Activated CD4-positive, alpha-beta memory T cell treated with anti-CD3 and anti-CD28 coated beads, Interleukin-2, amount 10 ng/mL, durations not matched to agents 7 days and 5 days (primary cell): ENCODE measurements at regions of chr2 and their contacts with region 1.

Region 1: GRCh38 chr2:3379647-3380534 is at the start of gene TRAPPC12:
- DNase-seq: peak; percentile 95
- H3K4me3 Mint-ChIP-seq: peak within 1 kb of the TSS; percentile 99
- H3K27ac Mint-ChIP-seq: peak within 1 kb of the TSS; percentile 96
- H3K4me1 Mint-ChIP-seq: peaks cover 57% of the 10 kb centered on the region
- H3K27me3 Mint-ChIP-seq: no peaks in the 10 kb centered on the region
- total RNA-seq, gene TRAPPC12: 74.5 to 75.6 TPM

Region 2: DNA sequence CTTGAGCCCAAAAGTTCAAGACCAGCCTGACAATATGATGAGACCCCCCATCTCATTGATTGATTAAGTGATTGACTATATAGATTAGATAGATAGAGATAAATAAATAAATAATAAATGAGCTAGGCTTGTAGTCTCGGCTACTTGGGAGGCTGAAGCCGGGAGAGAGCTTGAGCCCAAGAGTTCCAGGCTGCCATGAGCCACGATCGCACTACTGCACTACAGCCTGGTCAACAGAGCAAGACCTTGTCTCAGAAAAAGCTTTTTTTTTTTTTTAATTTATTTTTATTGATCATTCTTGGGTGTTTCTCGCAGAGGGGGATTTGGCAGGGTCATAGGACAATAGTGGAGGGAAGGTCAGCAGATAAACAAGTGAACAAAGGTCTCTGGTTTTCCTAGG is 14.7 kb before region 1 on chr2:
- CTCF ChIA-PET with region 1: no interaction called
- POLR2A ChIA-PET with region 1: no interaction called
- DNase-seq: no peak
- H3K4me3 Mint-ChIP-seq: no peak overlapping the region
- H3K27ac Mint-ChIP-seq: no peak overlapping the region
- H3K4me1 Mint-ChIP-seq: peaks cover 29% of the 10 kb centered on the region
- H3K27me3 Mint-ChIP-seq: no peaks in the 10 kb centered on the region

Region 3: GRCh38 chr2:3518496-3519254 is 138.8 kb after region 1 on chr2:
- CTCF ChIA-PET with region 1: interaction called, 4 read pairs
- POLR2A ChIA-PET with region 1: interaction called, 10 read pairs
- DNase-seq: peak; percentile 98
- H3K4me3 Mint-ChIP-seq: peak overlapping the region; percentile 80
- H3K27ac Mint-ChIP-seq: peak overlapping the region; percentile 84
- H3K4me1 Mint-ChIP-seq: peaks cover 41% of the 10 kb centered on the region
- H3K27me3 Mint-ChIP-seq: no peaks in the 10 kb centered on the region

Region 4: GRCh38 chr2:3651691-3652648 is 272.1 kb after region 1 on chr2:
- CTCF ChIA-PET with region 1: interaction called, 3 read pairs
- POLR2A ChIA-PET with region 1: interaction called, 16 read pairs
- DNase-seq: peak; percentile 78
- H3K4me3 Mint-ChIP-seq: peak overlapping the region; percentile 74
- H3K27ac Mint-ChIP-seq: peak overlapping the region; percentile 72
- H3K4me1 Mint-ChIP-seq: peaks cover 15% of the 10 kb centered on the region
- H3K27me3 Mint-ChIP-seq: no peaks in the 10 kb centered on the region